WTC11 (cell line): ENCODE measurements at regions of chr12 and their contacts with region 1.

Region 1: GRCh38 chr12:33322519-33322918 is 117.1 kb downstream of the SYT10 start:
- DNase-seq: no peak
- ATAC-seq: no peak
- H3K4me3 Mint-ChIP-seq: no peak overlapping the region
- H3K27ac Mint-ChIP-seq: no peak overlapping the region
- H3K4me1 Mint-ChIP-seq: no peaks in the 10 kb centered on the region
- H3K27me3 Mint-ChIP-seq: no peaks in the 10 kb centered on the region
- CTCF ChIP-seq: no peak

Region 2: DNA sequence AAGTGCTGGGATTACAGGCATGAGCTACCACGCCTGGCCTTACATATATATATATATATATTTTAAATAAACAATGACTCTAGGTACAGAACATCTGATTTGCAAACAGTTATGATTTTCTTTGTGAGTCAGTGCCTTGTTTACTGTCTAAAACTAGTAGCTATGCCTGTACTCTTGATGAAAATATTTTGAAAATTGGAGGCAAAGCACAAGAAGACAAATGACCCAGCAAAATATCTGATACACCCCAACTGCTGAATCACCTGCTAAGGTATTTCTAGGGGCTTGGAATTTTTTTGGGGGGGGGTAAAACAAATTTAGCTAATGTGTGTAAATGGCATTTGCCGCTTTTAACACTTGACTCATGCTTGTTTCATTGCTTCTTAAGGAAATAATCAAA is 47.8 kb after region 1 on chr12:
- CTCF ChIA-PET with region 1: no interaction called
- POLR2A ChIA-PET with region 1: no interaction called
- DNase-seq: no peak
- ATAC-seq: no peak
- H3K4me3 Mint-ChIP-seq: no peak overlapping the region
- H3K27ac Mint-ChIP-seq: no peak overlapping the region
- H3K4me1 Mint-ChIP-seq: no peaks in the 10 kb centered on the region
- H3K27me3 Mint-ChIP-seq: no peaks in the 10 kb centered on the region; the same call in 1 of the 2 replicates
- CTCF ChIP-seq: no peak

Region 3: DNA sequence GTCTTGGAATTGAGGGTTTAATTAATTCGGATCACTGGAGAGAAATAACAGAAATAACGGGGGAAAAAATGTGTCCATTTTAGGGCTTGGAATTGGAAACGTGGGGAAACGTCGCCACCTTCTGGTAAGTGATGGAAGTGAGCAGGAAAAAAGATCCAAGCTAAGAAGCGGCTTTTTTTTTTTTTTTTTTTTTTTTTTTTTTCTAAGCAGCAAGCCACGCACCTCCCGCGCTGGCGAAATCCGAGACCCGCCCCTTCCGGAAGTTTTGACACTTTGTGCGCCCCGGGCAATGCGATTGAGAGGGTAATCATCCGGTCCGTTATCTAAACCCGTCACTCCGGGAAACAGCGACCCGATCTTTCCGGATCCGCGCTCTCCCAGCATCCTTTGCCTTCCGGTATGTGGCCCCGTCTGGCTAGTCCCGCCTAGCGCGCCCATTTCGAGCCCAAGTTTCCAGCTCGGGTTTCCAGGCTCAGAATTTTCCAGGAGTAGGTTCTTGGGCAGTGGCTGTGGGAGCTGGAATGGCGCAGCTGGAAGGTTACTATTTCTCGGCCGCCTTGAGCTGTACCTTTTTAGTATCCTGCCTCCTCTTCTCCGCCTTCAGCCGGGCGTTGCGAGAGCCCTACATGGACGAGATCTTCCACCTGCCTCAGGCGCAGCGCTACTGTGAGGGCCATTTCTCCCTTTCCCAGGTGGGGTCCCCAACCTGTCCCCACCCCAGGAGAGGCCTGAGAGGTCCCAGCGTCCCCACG is 699.7 kb after region 1 on chr12 and contains the start of gene ALG10:
- CTCF ChIA-PET with region 1: no interaction called
- POLR2A ChIA-PET with region 1: interaction called, 10 read pairs
- DNase-seq: peak; percentile 95
- ATAC-seq: peak; percentile 100
- H3K4me3 Mint-ChIP-seq: peak within 1 kb of the TSS; percentile 92
- H3K27ac Mint-ChIP-seq: peak within 1 kb of the TSS; percentile 92
- H3K4me1 Mint-ChIP-seq: peaks cover 13% of the 10 kb centered on the region
- H3K27me3 Mint-ChIP-seq: no peaks in the 10 kb centered on the region; the same call in 1 of the 2 replicates
- CTCF ChIP-seq: peak; percentile 56
- total RNA-seq, gene ALG10: 12.9 to 16.3 TPM (median 16.0 TPM) in 3 replicates